ENCODE measurements at regions of chr10 and their contacts with region 1.

Region 1: GRCh38 chr10:74589226-74589673 is 237.2 kb upstream of the KAT6B start:
- DNase-seq: peak; percentile 41 to 97 (median 92)
- ATAC-seq: peak; percentile 88
- H3K4me3 ChIP-seq: no peak overlapping the region
- H3K4me3 Mint-ChIP-seq: peak overlapping the region in 8 of 10 donors; percentile 6 to 75 (median 60)
- H3K27ac ChIP-seq: peak overlapping the region; percentile 69
- H3K27ac Mint-ChIP-seq: peak overlapping the region; percentile 70 to 97 (median 93)
- H3K4me1 ChIP-seq: peaks cover 37 to 42% of the 10 kb centered on the region in 2 donors
- H3K4me1 Mint-ChIP-seq: peaks cover 21 to 66% (median 59%) of the 10 kb centered on the region in 7 donors
- H3K27me3 ChIP-seq: no peaks in the 10 kb centered on the region
- H3K27me3 Mint-ChIP-seq: no peaks in the 10 kb centered on the region

Region 2: GRCh38 chr10:73997787-73998622 is 591.2 kb before region 1 on chr10 and contains the start of gene VCL:
- CTCF ChIA-PET with region 1: no interaction called
- POLR2A ChIA-PET with region 1: no interaction called
- intact Hi-C with region 1: loop called in 1 of 2 experiments (anchors 10 kb)
- DNase-seq: peak; percentile 90 to 97 (median 95)
- ATAC-seq: peak; percentile 99
- H3K4me3 ChIP-seq: peak within 1 kb of the TSS; percentile 71
- H3K4me3 Mint-ChIP-seq: peak within 1 kb of the TSS; percentile 83 to 100 (median 97)
- H3K27ac ChIP-seq: peak within 1 kb of the TSS; percentile 91
- H3K27ac Mint-ChIP-seq: peak within 1 kb of the TSS; percentile 83 to 99 (median 98)
- H3K4me1 ChIP-seq: peaks cover 19 to 22% of the 10 kb centered on the region in 2 donors
- H3K4me1 Mint-ChIP-seq: peaks cover 43 to 53% (median 48%) of the 10 kb centered on the region in 7 donors
- H3K27me3 ChIP-seq: no peaks in the 10 kb centered on the region
- H3K27me3 Mint-ChIP-seq: no peaks in the 10 kb centered on the region
- total RNA-seq, gene VCL: 9.0 to 67.7 (median 21.6) TPM

Region 3: DNA sequence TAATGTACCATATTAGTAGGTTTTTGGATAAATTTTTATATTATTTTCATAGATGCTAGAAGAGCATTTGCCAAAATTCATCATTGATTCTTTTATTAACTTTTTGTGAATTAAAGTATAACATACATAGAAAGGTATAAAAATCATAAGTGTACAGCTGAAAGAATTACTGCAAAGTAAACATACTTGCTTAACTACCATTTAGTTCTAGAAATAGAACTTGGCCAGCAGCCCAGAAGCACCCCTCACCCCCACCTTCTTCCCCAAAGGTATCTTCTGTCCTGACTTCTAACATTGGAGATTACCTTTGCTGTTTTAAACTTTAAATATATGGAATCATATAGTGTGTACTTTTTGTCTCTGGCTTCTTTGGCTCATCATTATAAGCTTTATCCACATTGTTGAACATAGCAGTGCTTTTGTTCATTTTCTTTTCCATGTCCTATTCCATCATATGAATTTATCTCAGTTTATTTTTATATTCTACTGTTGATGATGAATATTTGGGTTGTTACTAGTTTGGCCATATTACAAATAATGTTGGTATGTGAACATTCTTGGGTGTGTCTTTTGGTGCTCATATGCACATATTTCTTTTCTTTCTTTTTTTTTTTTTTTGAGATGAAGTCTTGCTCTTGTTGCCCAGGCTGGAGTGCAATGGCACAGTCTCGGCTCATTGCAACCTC is 295.4 kb before region 1 on chr10:
- CTCF ChIA-PET with region 1: no interaction called
- POLR2A ChIA-PET with region 1: no interaction called
- intact Hi-C with region 1: no loop called
- DNase-seq: no peak
- ATAC-seq: no peak
- H3K4me3 ChIP-seq: no peak overlapping the region
- H3K4me3 Mint-ChIP-seq: no peak overlapping the region
- H3K27ac ChIP-seq: no peak overlapping the region
- H3K27ac Mint-ChIP-seq: peak overlapping the region in 1 of 9 donors; percentile 5
- H3K4me1 ChIP-seq: no peaks in the 10 kb centered on the region
- H3K4me1 Mint-ChIP-seq: peaks cover 0 to 37% (median 15%) of the 10 kb centered on the region in 7 donors
- H3K27me3 ChIP-seq: no peaks in the 10 kb centered on the region
- H3K27me3 Mint-ChIP-seq: no peaks in the 10 kb centered on the region

Region 4: DNA sequence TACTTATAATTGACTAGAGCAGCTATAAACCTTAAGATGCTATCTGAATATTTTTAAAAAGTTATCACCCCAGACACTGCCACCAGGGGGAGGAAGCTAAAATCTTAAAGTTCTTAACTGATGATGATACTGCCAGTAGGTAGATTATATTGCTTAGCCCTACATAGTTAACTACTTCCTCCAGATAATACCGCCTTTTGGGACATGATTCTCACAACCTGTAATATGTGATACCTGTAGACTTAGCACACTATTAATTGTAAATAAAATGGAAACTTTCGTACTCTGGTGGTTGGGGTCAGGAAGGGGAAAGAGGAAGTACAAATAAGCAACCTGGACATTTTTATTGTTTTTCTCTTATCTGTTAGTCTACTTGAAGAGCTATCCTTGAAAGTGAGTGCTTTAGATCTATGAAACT is 169.3 kb before region 1 on chr10:
- CTCF ChIA-PET with region 1: interaction called, 6 read pairs
- POLR2A ChIA-PET with region 1: no interaction called
- intact Hi-C with region 1: loop called in 1 of 2 experiments (anchors 2 kb)
- DNase-seq: peak in 7 of 9 donors; percentile 15 to 53 (median 48)
- ATAC-seq: peak; percentile 63
- H3K4me3 ChIP-seq: no peak overlapping the region
- H3K4me3 Mint-ChIP-seq: no peak overlapping the region
- H3K27ac ChIP-seq: no peak overlapping the region
- H3K27ac Mint-ChIP-seq: peak overlapping the region in 1 of 9 donors; percentile 57
- H3K4me1 ChIP-seq: no peaks in the 10 kb centered on the region
- H3K4me1 Mint-ChIP-seq: peaks cover 5 to 12% (median 7%) of the 10 kb centered on the region in 7 donors
- H3K27me3 ChIP-seq: no peaks in the 10 kb centered on the region
- H3K27me3 Mint-ChIP-seq: no peaks in the 10 kb centered on the region

Region 5: DNA sequence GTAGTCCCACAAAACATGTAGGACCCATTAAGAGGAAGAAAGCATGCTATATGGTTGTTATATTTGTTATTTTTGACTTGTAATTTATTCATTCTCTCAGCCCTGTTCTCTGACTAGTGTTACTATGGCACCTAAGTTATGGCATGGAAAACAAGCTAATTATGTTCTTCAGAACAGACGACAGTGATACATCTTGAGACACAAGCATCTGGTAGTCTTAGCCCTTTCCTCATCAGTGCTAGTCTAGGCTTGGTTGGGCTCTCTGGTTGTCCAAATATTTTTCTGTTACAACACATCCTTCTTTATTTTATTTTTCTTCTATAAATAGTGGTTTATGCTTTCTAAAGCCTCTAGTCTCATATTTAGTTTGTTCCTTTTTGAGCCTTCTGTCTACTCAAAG is 71.2 kb before region 1 on chr10:
- CTCF ChIA-PET with region 1: no interaction called
- POLR2A ChIA-PET with region 1: no interaction called
- intact Hi-C with region 1: no loop called
- DNase-seq: no peak
- ATAC-seq: no peak
- H3K4me3 ChIP-seq: no peak overlapping the region
- H3K4me3 Mint-ChIP-seq: no peak overlapping the region
- H3K27ac ChIP-seq: no peak overlapping the region
- H3K27ac Mint-ChIP-seq: no peak overlapping the region
- H3K4me1 ChIP-seq: no peaks in the 10 kb centered on the region
- H3K4me1 Mint-ChIP-seq: peaks cover 0 to 6% (median 0%) of the 10 kb centered on the region in 7 donors
- H3K27me3 ChIP-seq: no peaks in the 10 kb centered on the region
- H3K27me3 Mint-ChIP-seq: no peaks in the 10 kb centered on the region

Region 6: DNA sequence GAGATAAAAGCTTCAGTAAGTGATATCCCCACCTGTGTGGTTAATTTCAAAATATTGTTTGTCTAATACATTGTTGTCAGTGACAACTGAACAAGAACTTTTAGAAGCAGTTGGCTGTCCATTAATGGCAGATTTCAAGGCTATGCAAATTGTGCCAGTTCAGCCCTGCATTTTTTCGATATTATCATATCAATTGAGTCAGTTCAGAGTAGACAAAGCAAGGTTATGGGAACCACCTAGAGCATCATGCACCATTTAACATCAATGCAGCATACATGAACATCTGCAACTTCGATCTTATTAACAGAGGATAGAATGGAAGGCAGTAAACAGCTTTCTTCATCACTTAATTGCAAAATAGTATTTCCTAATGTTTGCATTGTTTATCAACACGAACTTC is 56.4 kb after region 1 on chr10:
- CTCF ChIA-PET with region 1: no interaction called
- POLR2A ChIA-PET with region 1: no interaction called
- intact Hi-C with region 1: loop called in 1 of 2 experiments (anchors 5 kb)
- DNase-seq: no peak
- ATAC-seq: no peak
- H3K4me3 ChIP-seq: no peak overlapping the region
- H3K4me3 Mint-ChIP-seq: no peak overlapping the region
- H3K27ac ChIP-seq: no peak overlapping the region
- H3K27ac Mint-ChIP-seq: no peak overlapping the region
- H3K4me1 ChIP-seq: no peaks in the 10 kb centered on the region
- H3K4me1 Mint-ChIP-seq: peaks cover 0 to 10% (median 4%) of the 10 kb centered on the region in 7 donors
- H3K27me3 ChIP-seq: no peaks in the 10 kb centered on the region
- H3K27me3 Mint-ChIP-seq: no peaks in the 10 kb centered on the region

Region 7: GRCh38 chr10:74977913-74978847 is 388.9 kb after region 1 on chr10:
- CTCF ChIA-PET with region 1: no interaction called
- POLR2A ChIA-PET with region 1: no interaction called
- intact Hi-C with region 1: loop called in 1 of 2 experiments (anchors 1 kb)
- DNase-seq: peak in 7 of 9 donors; percentile 11 to 68 (median 46)
- ATAC-seq: peak; percentile 93
- H3K4me3 ChIP-seq: no peak overlapping the region
- H3K4me3 Mint-ChIP-seq: peak overlapping the region in 6 of 10 donors; percentile 18 to 71 (median 44)
- H3K27ac ChIP-seq: no peak overlapping the region
- H3K27ac Mint-ChIP-seq: peak overlapping the region in 4 of 9 donors; percentile 45 to 82 (median 55)
- H3K4me1 ChIP-seq: peaks cover 13 to 19% of the 10 kb centered on the region in 2 donors
- H3K4me1 Mint-ChIP-seq: peaks cover 19 to 42% (median 32%) of the 10 kb centered on the region in 7 donors
- H3K27me3 ChIP-seq: no peaks in the 10 kb centered on the region
- H3K27me3 Mint-ChIP-seq: no peaks in the 10 kb centered on the region

Measured in naive thymus-derived CD4-positive, alpha-beta T cell (primary cell).